ENCODE measurements at regions of chr3 and their contacts with region 1.

Region 1: GRCh38 chr3:113838631-113839209 is at the start of gene GRAMD1C:
- DNase-seq: peak; percentile 93
- H3K4me3 ChIP-seq: peak within 1 kb of the TSS; percentile 55 to 70 (median 59)
- H3K27ac ChIP-seq: peak within 1 kb of the TSS; percentile 33 to 60 (median 50)
- H3K4me1 ChIP-seq: peaks cover 0 to 13% (median 9%) of the 10 kb centered on the region in 4 donors
- H3K27me3 ChIP-seq: no peaks in the 10 kb centered on the region
- CTCF ChIP-seq: peak; percentile 83 to 85 (median 83)
- EP300 ChIP-seq: no peak
- POLR2A ChIP-seq: no peak
- total RNA-seq, gene GRAMD1C: 0.33 to 2.7 (median 1.0) TPM in 3 of 4 donors, not detected in the other

Region 2: GRCh38 chr3:113736548-113737089 is 102.1 kb before region 1 on chr3:
- intact Hi-C with region 1: loop called (anchors 10 kb)
- DNase-seq: no peak
- H3K4me3 ChIP-seq: peak overlapping the region in 2 of 4 donors; percentile 10 to 20
- H3K27ac ChIP-seq: peak overlapping the region; percentile 19 to 54 (median 34)
- H3K4me1 ChIP-seq: peaks cover 29 to 76% (median 66%) of the 10 kb centered on the region in 4 donors
- H3K27me3 ChIP-seq: no peaks in the 10 kb centered on the region
- CTCF ChIP-seq: peak; percentile 68 to 78 (median 72)
- EP300 ChIP-seq: no peak
- POLR2A ChIP-seq: no peak

Region 3: DNA sequence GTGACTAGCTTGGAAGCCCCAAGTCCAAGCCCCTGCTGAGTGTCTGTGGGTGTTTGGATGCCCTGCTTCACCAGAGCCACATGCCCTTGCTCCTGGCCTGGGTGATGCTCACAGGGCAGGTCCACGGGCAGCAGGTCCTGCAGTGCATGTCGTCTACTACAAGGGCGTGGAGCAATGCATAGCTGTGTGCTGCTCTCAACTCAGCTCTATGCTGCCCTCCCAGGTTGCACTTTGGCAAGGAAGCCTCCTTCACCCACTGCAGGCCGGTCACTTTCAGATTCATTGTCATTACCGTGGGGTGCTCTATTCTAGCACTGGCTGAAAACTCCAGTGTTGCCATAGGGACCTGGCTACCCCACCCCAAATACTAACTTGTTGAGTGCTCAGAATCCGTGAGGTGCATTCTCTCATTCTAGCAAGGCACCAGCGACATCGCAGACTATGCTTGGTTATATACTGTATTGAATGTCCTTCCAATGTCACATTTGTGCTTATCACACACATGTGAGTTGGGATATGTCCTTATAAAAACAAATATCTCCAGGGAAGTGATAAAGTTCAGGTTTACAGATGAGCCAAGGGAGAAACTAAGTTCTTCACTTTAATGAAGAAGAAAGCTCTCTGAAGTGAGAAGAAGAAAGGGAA is 51.7 kb after region 1 on chr3:
- intact Hi-C with region 1: no loop called
- DNase-seq: no peak
- H3K4me3 ChIP-seq: no peak overlapping the region
- H3K27ac ChIP-seq: no peak overlapping the region
- H3K4me1 ChIP-seq: no peaks in the 10 kb centered on the region
- H3K27me3 ChIP-seq: no peaks in the 10 kb centered on the region
- CTCF ChIP-seq: no peak
- EP300 ChIP-seq: no peak
- POLR2A ChIP-seq: no peak

Region 4: DNA sequence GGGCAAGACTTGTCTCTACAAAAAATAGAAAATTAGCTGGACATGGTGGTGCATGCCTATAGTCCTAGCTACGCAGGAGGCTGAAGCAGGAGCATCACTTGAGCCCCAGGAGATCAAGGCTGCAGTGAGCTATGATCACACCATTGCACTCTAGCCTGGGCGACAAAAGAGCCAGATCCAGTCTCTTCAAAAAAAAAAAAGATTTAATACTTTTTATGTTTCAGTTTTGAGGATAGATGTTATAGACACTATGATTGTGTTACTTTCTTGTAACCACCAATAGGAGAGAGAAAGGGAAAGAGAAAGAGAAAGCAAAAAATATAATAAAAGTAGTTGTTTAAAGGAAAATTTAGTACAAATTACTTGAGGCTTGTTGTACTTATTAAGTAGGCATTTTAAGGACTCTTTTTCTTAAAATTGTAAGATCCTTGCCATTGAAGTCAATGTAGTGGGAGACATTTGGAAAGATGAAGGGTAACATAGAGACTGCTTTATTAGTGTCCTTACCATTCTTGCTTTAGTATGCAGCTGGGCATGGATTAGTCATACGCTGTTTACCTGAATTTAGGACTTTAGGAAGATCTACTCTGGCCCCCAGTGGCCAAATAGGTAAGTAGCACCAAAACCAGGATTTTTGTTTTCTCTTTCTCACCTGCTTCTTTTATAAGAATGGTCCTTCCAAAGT is 74.0 kb after region 1 on chr3:
- intact Hi-C with region 1: loop called (anchors 5 kb)
- DNase-seq: no peak
- H3K4me3 ChIP-seq: no peak overlapping the region
- H3K27ac ChIP-seq: no peak overlapping the region
- H3K4me1 ChIP-seq: no peaks in the 10 kb centered on the region
- H3K27me3 ChIP-seq: no peaks in the 10 kb centered on the region
- CTCF ChIP-seq: peak; percentile 41 to 54 (median 46)
- EP300 ChIP-seq: no peak
- POLR2A ChIP-seq: no peak

Region 5: DNA sequence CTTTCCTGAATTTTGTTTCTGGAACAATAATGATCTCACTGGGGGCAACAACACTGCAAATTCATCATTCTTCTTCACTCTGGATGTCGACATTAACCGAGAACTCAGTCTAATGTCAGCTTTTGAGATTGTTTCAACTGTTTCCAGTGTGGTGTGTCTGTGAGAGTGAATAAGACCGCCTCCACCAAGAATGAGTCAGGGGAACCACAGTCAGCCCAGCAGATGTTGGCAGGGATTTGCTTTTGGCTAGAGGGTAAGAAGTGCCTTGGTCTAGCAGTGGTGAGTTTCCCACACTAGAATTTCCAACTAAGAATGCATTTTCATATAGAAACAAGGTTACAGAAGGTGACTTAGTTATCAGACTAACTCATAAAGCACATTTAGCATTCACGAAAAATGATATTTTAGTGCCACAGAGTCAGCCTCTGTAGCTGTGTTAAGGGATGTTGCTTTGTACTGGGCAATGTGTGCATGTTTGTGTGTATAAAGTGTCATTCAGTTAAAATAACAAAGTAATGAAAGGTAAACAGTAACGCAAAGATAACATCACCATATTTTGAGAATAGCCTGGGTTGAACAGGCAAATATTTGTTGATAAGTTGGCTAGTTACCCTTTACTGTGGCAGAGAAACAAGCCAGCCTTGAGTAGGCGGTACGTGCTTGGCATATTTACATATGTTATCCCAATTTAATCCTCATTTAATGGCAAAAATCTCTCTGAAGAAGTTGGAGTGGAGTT is 306.4 kb after region 1 on chr3:
- intact Hi-C with region 1: no loop called
- DNase-seq: no peak
- H3K4me3 ChIP-seq: no peak overlapping the region
- H3K27ac ChIP-seq: no peak overlapping the region
- H3K4me1 ChIP-seq: peaks cover 0 to 7% (median 2%) of the 10 kb centered on the region in 4 donors
- H3K27me3 ChIP-seq: no peaks in the 10 kb centered on the region
- CTCF ChIP-seq: no peak
- EP300 ChIP-seq: no peak
- POLR2A ChIP-seq: no peak

Region 6: GRCh38 chr3:114566162-114566755 is 727.5 kb after region 1 on chr3:
- intact Hi-C with region 1: no loop called
- DNase-seq: no peak
- H3K4me3 ChIP-seq: no peak overlapping the region
- H3K27ac ChIP-seq: no peak overlapping the region
- H3K4me1 ChIP-seq: peaks cover 6 to 40% (median 19%) of the 10 kb centered on the region in 4 donors
- H3K27me3 ChIP-seq: no peaks in the 10 kb centered on the region
- CTCF ChIP-seq: no peak
- EP300 ChIP-seq: no peak
- POLR2A ChIP-seq: no peak

Region 7: DNA sequence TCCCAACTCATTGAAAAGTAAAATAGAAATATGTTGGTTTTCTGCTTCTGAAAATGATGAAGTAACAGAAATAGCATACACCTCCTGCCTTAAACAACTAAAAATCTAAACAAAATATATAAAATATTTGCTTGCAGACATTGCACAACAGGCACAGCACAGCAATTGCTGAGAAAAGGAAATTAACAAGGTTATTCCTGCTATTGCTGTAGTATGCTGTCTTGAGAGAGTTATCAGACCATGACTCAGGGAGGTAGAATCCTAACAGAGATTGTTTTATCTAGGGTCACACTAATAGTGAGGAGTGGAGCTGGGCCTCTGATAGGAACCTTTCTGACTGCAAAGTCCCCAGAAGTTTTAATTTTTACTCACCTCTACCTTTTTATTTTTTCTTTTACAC is 1235.8 kb after region 1 on chr3:
- intact Hi-C with region 1: no loop called
- DNase-seq: no peak
- H3K4me3 ChIP-seq: no peak overlapping the region
- H3K27ac ChIP-seq: no peak overlapping the region
- H3K4me1 ChIP-seq: peaks cover 31 to 46% (median 38%) of the 10 kb centered on the region in 4 donors
- H3K27me3 ChIP-seq: no peaks in the 10 kb centered on the region
- CTCF ChIP-seq: no peak
- EP300 ChIP-seq: no peak
- POLR2A ChIP-seq: no peak